Natural killer cell (primary cell): ENCODE measurements at regions of chr12 and their contacts with region 1.

Region 1: DNA sequence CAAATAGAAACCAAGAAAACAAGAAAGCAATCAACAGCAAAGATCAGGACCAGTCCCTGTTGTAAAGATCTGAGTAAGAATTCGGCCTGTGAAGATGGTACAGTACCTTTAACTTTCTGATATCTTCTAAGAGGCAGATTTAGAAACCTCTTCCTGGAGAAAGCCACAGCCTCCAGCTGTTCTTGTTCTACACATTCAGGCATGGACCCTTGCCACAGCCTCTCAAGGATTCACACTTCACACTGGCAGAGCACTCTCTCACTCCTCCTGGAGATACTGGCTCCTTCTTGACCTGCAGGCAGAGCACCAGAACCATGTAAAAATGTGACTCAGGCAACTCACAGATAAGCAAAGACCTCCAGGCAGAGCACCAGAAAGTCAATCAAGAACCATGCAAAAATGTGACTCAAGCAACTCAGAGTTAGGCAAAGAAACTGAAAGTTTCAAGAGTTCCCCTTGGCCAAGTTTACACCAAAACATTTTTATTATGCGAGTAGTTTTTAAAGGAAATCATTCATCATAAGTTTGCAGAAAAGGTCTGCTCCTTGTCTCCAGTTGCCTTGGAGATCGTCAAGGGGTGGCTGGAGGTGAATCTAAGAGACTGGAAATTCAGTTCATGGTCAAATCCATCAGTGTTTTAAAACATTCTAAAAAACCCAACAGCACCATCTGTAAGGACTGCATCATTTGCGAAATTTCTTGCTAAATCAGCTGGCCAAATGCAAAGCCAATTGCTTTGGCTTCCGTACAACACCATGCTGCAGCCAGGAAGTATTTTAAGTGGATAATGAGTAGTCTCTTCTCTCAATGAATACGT is 119.3 kb upstream of the MDM1 start:
- DNase-seq: peak; percentile 50 to 54
- ATAC-seq: peak; percentile 65 to 73 (median 67)
- H3K4me3 ChIP-seq: peak overlapping the region; percentile 40
- H3K4me3 Mint-ChIP-seq: peak overlapping the region; percentile 90
- H3K27ac ChIP-seq: peak overlapping the region; percentile 67
- H3K27ac Mint-ChIP-seq: peak overlapping the region; percentile 87 to 90
- H3K4me1 ChIP-seq: peaks cover 46% of the 10 kb centered on the region
- H3K4me1 Mint-ChIP-seq: peaks cover 98 to 100% of the 10 kb centered on the region in 2 donors
- H3K27me3 ChIP-seq: no peaks in the 10 kb centered on the region
- H3K27me3 Mint-ChIP-seq: no peaks in the 10 kb centered on the region
- CTCF ChIP-seq: no peak

Region 2: DNA sequence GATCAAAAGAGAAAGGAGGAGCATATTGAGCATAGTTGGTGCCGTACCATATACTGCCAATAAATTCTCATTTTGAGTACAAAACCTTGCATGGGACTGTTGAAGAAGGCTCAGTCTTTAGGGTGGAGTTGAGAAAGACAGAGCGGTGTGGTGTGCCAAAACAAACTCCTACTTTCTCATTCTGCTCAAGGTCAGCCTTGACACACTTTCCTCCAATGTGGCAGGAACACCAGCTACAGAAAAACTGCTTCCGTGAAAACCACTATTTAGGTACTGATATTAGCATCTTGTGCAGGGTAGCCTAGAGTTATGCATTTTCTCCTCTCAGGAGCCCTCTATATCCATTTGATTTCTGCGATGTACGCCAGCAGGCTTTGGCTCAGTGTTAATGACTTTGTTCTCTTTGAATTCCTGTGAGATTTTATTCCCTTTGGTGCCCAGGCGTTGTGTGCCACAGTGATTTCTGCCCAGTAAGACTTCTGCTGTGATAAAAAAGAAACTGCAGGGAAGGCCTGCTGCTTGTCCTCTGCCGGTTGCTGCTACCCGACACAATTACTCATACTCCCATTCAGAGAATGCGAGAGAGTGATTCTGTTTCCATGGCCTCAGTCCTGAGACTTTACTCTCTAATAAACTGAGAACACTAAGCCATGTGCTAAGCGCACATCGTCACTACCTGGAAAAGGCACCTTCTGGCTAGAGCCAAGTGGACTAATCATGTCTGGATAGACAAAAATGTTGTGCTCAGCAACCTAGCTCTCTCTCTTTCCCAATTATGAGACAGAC is 31.1 kb before region 1 on chr12:
- intact Hi-C with region 1: loop called (anchors 5 kb)
- DNase-seq: peak in 1 of 2 donors; percentile 15
- ATAC-seq: peak; percentile 40 to 56 (median 40)
- H3K4me3 ChIP-seq: no peak overlapping the region
- H3K4me3 Mint-ChIP-seq: peak overlapping the region; percentile 78
- H3K27ac ChIP-seq: peak overlapping the region; percentile 75
- H3K27ac Mint-ChIP-seq: peak overlapping the region; percentile 88 to 91
- H3K4me1 ChIP-seq: peaks cover 57% of the 10 kb centered on the region
- H3K4me1 Mint-ChIP-seq: peaks cover 69 to 77% of the 10 kb centered on the region in 2 donors
- H3K27me3 ChIP-seq: no peaks in the 10 kb centered on the region
- H3K27me3 Mint-ChIP-seq: no peaks in the 10 kb centered on the region
- CTCF ChIP-seq: no peak

Region 3: DNA sequence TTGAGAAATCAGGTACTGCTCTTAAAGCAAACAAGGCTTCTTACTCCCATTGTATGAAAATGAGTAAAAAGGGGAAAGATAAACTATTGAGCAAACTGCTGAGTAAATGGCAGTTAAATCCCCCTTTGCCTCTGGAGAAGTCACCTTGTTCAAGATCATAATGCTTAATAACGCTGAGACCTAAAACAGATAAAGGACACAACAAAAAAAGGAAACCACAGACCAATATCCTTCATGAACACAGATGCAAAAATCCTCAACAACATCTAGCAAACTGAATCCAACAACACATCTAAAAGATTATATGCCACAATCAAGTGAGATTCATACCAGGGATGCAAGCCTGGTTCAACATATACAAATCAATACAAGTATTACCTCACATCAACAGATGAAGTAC is 10.3 kb before region 1 on chr12:
- intact Hi-C with region 1: loop called (anchors 1 kb)
- DNase-seq: no peak
- ATAC-seq: no peak
- H3K4me3 ChIP-seq: no peak overlapping the region
- H3K4me3 Mint-ChIP-seq: peak overlapping the region; percentile 78
- H3K27ac ChIP-seq: peak overlapping the region; percentile 50
- H3K27ac Mint-ChIP-seq: peak overlapping the region; percentile 87 to 90
- H3K4me1 ChIP-seq: peaks cover 35% of the 10 kb centered on the region
- H3K4me1 Mint-ChIP-seq: peaks cover 90 to 94% of the 10 kb centered on the region in 2 donors
- H3K27me3 ChIP-seq: no peaks in the 10 kb centered on the region
- H3K27me3 Mint-ChIP-seq: no peaks in the 10 kb centered on the region
- CTCF ChIP-seq: no peak

Region 4: GRCh38 chr12:68462803-68463202 is 11.3 kb after region 1 on chr12:
- intact Hi-C with region 1: loop called (anchors 2 kb)
- DNase-seq: peak in 1 of 2 donors; percentile 56
- ATAC-seq: peak; percentile 62 to 77 (median 76)
- H3K4me3 ChIP-seq: peak overlapping the region; percentile 37
- H3K4me3 Mint-ChIP-seq: peak overlapping the region; percentile 90
- H3K27ac ChIP-seq: peak overlapping the region; percentile 97
- H3K27ac Mint-ChIP-seq: peak overlapping the region; percentile 95 to 97
- H3K4me1 ChIP-seq: peaks cover 27% of the 10 kb centered on the region
- H3K4me1 Mint-ChIP-seq: peaks cover 29 to 34% of the 10 kb centered on the region in 2 donors
- H3K27me3 ChIP-seq: no peaks in the 10 kb centered on the region
- H3K27me3 Mint-ChIP-seq: no peaks in the 10 kb centered on the region
- CTCF ChIP-seq: no peak

Region 5: DNA sequence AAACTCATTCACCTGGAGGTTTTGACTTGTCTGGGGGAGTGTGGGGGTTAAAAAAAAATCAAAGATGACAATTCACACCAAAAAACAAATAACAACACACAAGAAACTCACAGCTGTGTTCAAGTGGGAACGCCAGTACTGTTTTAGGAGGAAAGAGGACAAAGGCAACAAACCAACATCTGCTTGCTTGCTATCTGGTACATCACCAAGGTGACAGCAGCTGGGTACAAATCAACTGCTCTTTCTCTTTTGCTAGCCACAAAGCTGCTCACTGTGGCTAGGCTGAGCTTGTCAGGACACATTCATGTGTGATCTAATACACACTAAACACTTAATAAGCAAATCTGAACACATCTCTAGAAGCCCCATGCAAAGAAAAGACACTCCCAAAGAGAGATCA is 31.2 kb after region 1 on chr12:
- intact Hi-C with region 1: loop called (anchors 5 kb)
- DNase-seq: peak; percentile 36 to 53
- ATAC-seq: peak; percentile 80 to 94 (median 85)
- H3K4me3 ChIP-seq: no peak overlapping the region
- H3K4me3 Mint-ChIP-seq: peak overlapping the region; percentile 61
- H3K27ac ChIP-seq: peak overlapping the region; percentile 76
- H3K27ac Mint-ChIP-seq: peak overlapping the region; percentile 87 to 89
- H3K4me1 ChIP-seq: peaks cover 13% of the 10 kb centered on the region
- H3K4me1 Mint-ChIP-seq: peaks cover 35% of the 10 kb centered on the region in 2 donors
- H3K27me3 ChIP-seq: no peaks in the 10 kb centered on the region
- H3K27me3 Mint-ChIP-seq: no peaks in the 10 kb centered on the region
- CTCF ChIP-seq: no peak

Region 6: DNA sequence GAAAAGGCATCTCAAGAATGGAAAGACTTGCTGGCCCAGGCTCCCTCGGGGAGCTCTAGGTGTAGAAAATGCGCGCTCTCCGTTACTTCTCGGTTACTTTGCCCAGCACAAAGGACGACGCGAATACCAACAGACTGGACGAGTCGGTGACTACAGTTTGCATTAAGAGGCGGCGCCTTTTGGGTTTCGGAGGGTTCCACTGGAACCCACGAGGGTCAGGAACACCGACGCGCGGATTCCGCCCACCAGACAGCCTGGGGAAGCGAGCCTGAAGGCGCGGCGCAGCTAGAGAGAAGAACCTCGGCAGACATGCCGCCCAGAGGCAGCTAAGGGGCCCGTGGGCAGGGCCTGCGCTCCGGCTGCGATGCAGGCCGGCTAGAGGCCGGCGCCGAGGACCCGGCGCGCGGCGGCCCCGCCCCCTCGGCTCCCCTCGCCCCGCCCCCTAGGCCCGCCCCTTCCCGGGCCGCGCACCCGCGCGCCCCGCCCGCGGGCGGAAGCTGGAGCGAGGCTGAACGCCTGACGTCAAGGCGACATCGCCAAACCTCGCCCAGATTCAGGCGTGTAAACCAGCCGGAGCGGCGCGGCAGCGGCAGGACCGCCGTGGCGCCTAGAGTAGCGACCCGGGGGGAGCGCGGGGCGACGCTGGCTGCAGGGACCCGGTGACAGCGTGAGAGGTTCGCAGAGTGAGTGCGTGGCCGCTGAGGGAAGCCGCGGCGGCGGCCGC is 159.1 kb after region 1 on chr12 and contains the start of gene RAP1B:
- intact Hi-C with region 1: loop called (anchors 5 kb)
- DNase-seq: peak; percentile 87 to 96
- ATAC-seq: peak; percentile 76 to 94 (median 85)
- H3K4me3 ChIP-seq: peak within 1 kb of the TSS; percentile 100
- H3K4me3 Mint-ChIP-seq: peak within 1 kb of the TSS; percentile 98
- H3K27ac ChIP-seq: peak within 1 kb of the TSS; percentile 99
- H3K27ac Mint-ChIP-seq: peak within 1 kb of the TSS; percentile 84 to 95
- H3K4me1 ChIP-seq: peaks cover 19% of the 10 kb centered on the region
- H3K4me1 Mint-ChIP-seq: peaks cover 57 to 58% of the 10 kb centered on the region in 2 donors
- H3K27me3 ChIP-seq: no peaks in the 10 kb centered on the region
- H3K27me3 Mint-ChIP-seq: no peaks in the 10 kb centered on the region
- CTCF ChIP-seq: no peak
- total RNA-seq, gene RAP1B: 517 to 664 (median 572) TPM